ENCODE measurements at regions of chr19 and their contacts with region 1.

Region 1: GRCh38 chr19:10269333-10270179 is 1.4 kb upstream of the ICAM1 start:
- DNase-seq: peak; percentile 92
- ATAC-seq: peak; percentile 69
- H3K4me3 Mint-ChIP-seq: peak overlapping the region; percentile 82
- H3K27ac Mint-ChIP-seq: peak overlapping the region; percentile 93
- H3K4me1 Mint-ChIP-seq: peaks cover 35% of the 10 kb centered on the region
- H3K27me3 Mint-ChIP-seq: no peaks in the 10 kb centered on the region

Region 2: GRCh38 chr19:10222201-10222890 is 47.2 kb before region 1 on chr19:
- CTCF ChIA-PET with region 1: no interaction called
- POLR2A ChIA-PET with region 1: no interaction called
- DNase-seq: no peak
- ATAC-seq: no peak
- H3K4me3 Mint-ChIP-seq: no peak overlapping the region
- H3K27ac Mint-ChIP-seq: no peak overlapping the region
- H3K4me1 Mint-ChIP-seq: peaks cover 4% of the 10 kb centered on the region
- H3K27me3 Mint-ChIP-seq: no peaks in the 10 kb centered on the region

Region 3: GRCh38 chr19:10235003-10235402 is 34.6 kb before region 1 on chr19:
- CTCF ChIA-PET with region 1: no interaction called
- POLR2A ChIA-PET with region 1: no interaction called
- DNase-seq: no peak
- ATAC-seq: no peak
- H3K4me3 Mint-ChIP-seq: no peak overlapping the region
- H3K27ac Mint-ChIP-seq: peak overlapping the region; percentile 99
- H3K4me1 Mint-ChIP-seq: peaks cover 29% of the 10 kb centered on the region
- H3K27me3 Mint-ChIP-seq: no peaks in the 10 kb centered on the region

Region 4: GRCh38 chr19:10279737-10280442 is 10.3 kb after region 1 on chr19:
- CTCF ChIA-PET with region 1: interaction called, 40 read pairs
- POLR2A ChIA-PET with region 1: interaction called, 16 read pairs
- DNase-seq: peak; percentile 44
- ATAC-seq: peak; percentile 60
- H3K4me3 Mint-ChIP-seq: no peak overlapping the region
- H3K27ac Mint-ChIP-seq: peak overlapping the region; percentile 58
- H3K4me1 Mint-ChIP-seq: peaks cover 31% of the 10 kb centered on the region
- H3K27me3 Mint-ChIP-seq: no peaks in the 10 kb centered on the region

Region 5: DNA sequence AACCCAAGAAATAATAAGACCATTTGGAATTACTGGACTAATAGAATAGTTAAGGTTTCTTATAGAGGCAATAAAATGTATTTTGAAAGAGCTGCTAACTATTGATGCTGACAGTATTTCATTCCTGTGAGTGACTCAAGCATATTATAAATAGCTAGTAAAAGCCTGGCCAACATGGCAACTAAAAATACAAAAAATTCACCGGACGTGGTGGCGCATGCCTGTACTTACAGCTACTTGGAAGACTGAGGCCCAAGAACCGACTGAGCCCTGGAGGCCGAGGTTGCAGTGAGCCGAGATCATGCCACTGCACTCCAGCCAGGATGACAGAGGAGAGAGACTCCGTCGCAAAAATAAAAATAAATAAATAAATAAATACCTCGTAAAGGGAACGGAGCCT is 75.2 kb after region 1 on chr19:
- CTCF ChIA-PET with region 1: interaction called, 11 read pairs
- POLR2A ChIA-PET with region 1: interaction called, 4 read pairs
- DNase-seq: no peak
- ATAC-seq: no peak
- H3K4me3 Mint-ChIP-seq: no peak overlapping the region
- H3K27ac Mint-ChIP-seq: no peak overlapping the region
- H3K4me1 Mint-ChIP-seq: peaks cover 10% of the 10 kb centered on the region
- H3K27me3 Mint-ChIP-seq: no peaks in the 10 kb centered on the region

Region 6: DNA sequence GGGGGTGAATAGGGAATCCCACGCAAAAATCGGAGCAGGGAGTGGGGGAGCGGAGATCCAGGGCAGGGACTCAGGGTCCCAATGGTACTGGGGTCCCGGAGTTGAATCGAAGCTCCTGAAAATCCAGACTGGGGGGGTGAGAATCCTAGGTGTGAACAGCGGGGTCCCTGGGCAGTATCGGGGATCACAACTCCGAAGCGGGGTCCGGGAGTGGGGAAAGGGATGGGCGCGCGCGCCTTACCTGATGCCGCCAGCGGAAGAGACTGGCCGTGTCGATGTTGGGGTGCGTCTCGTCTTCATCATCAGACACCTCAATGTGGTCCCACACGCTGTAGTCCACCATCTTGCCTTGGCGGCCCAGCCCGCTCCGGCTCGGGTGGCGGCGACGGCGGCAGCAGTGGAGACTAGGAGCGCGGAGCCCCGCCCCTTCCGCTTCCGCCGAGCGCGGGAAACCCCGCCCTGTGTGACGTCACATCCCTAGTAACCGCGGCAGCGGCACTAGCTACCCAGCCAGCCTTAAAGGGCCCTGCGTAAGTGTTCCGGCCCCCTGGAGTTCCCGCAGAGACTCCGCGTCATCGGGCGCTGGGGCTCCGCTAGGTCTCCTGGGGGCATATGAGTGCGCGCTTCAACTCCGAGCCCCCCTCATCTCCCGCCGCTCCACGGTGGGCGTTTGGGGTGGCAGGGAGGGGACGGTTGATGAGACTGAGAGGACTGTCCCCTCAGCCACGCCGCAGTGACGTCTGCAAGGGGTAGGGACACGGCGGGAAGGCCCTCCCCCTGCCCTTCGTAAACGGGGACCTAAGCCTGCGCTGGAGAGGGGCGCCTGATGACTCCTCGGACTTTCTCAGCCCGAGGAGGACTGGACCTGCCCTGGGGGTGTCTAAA is 133.8 kb after region 1 on chr19 and contains the start of gene CDC37:
- CTCF ChIA-PET with region 1: interaction called, 23 read pairs
- POLR2A ChIA-PET with region 1: interaction called, 15 read pairs
- DNase-seq: peak; percentile 98
- ATAC-seq: peak; percentile 71
- H3K4me3 Mint-ChIP-seq: peak within 1 kb of the TSS; percentile 94
- H3K27ac Mint-ChIP-seq: peak within 1 kb of the TSS; percentile 95
- H3K4me1 Mint-ChIP-seq: peaks cover 70% of the 10 kb centered on the region
- H3K27me3 Mint-ChIP-seq: no peaks in the 10 kb centered on the region
- total RNA-seq, gene CDC37: 264 to 288 TPM